ENCODE measurements at regions of chr1 and their contacts with region 1.

Region 1: GRCh38 chr1:233406339-233406960 is 78.9 kb downstream of the MAP3K21 start:
- DNase-seq: no peak
- ATAC-seq: no peak
- H3K4me3 ChIP-seq: no peak overlapping the region
- H3K27ac ChIP-seq: no peak overlapping the region
- H3K4me1 ChIP-seq: no peaks in the 10 kb centered on the region
- H3K27me3 ChIP-seq: peaks cover 3% of the 10 kb centered on the region; the same call in 1 of the 2 replicates
- CTCF ChIP-seq: no peak

Region 2: GRCh38 chr1:233394860-233395717 is 11.4 kb before region 1 on chr1:
- CTCF ChIA-PET with region 1: interaction called, 15 read pairs
- POLR2A ChIA-PET with region 1: no interaction called
- in situ Hi-C with region 1: no loop called
- intact Hi-C with region 1: no loop called
- DNase-seq: peak; percentile 51
- ATAC-seq: peak; percentile 95
- H3K4me3 ChIP-seq: no peak overlapping the region
- H3K27ac ChIP-seq: no peak overlapping the region
- H3K4me1 ChIP-seq: 0 out of 2 replicates have a peak, but pooled peaks cover 4% of the 10 kb centered on the region
- H3K27me3 ChIP-seq: no peaks in the 10 kb centered on the region
- CTCF ChIP-seq: peak; percentile 81; the same call in 1 of the 2 replicates

Region 3: GRCh38 chr1:233470738-233471499 is 64.5 kb after region 1 on chr1:
- CTCF ChIA-PET with region 1: no interaction called
- POLR2A ChIA-PET with region 1: no interaction called
- in situ Hi-C with region 1: no loop called
- intact Hi-C with region 1: no loop called
- DNase-seq: no peak
- ATAC-seq: no peak
- H3K4me3 ChIP-seq: no peak overlapping the region
- H3K27ac ChIP-seq: no peak overlapping the region
- H3K4me1 ChIP-seq: no peaks in the 10 kb centered on the region
- H3K27me3 ChIP-seq: peaks cover 2% of the 10 kb centered on the region; the same call in 1 of the 2 replicates
- CTCF ChIP-seq: no peak

Measured in Panc1 (cell line).